Mucosa of descending colon (tissue), 3 donors: ENCODE measurements at regions of chr22 and their contacts with region 1.

Region 1: GRCh38 chr22:23857606-23858483 is at the start of gene SLC2A11:
- DNase-seq: peak; percentile 96 to 98 (median 97)
- ATAC-seq: peak; percentile 97
- H3K4me3 ChIP-seq: peak within 1 kb of the TSS; percentile 29
- H3K4me1 ChIP-seq: peaks cover 6% of the 10 kb centered on the region
- CTCF ChIP-seq: peak; percentile 21
- total RNA-seq, gene SLC2A11: 11.5 to 14.7 (median 12.5) TPM

Region 2: GRCh38 chr22:23767673-23768548 is 89.9 kb before region 1 on chr22 and contains the start of gene CHCHD10:
- intact Hi-C with region 1: loop called in 1 of 2 experiments (anchors 5 kb)
- DNase-seq: peak; percentile 92 to 93 (median 92)
- ATAC-seq: peak; percentile 86
- H3K4me3 ChIP-seq: peak within 1 kb of the TSS; percentile 67
- H3K4me1 ChIP-seq: peaks cover 30% of the 10 kb centered on the region
- CTCF ChIP-seq: peak; percentile 73
- total RNA-seq, gene CHCHD10: 279 to 464 (median 462) TPM

Region 3: DNA sequence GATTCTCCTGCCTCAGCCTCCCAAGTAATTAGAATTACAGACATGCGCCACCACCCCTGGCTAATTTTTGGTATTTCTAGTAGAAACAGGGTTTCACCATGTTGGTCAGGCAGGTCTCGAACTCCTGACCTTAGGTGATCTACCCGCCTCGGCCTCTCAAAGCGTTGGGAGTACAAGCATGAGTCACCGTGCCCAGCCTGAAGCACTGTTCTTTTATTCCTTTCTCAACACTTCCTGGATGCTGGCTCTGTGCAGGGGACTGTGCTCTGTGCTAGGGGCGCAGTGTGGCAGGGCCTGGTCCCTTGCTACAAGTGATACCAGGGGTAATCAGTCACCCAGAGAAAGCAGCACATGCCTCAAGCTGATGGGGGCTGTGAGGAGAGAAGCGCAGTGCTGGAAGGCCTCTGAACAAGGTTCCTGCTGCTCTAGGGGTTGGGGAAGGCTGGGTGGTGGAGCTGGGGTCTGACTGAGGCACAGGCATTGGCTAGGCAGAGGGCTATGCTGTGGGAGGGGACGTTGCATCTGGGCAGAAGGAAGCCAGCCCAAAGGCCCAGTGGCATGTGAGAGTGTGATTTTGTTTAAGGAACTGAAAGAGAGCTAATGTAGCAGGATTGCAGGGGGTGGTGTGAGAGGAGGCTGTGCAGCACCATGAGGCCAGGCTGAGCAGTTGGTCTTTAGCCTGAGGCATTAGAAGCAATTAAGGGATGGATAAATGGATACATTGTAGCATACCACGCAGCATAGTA is 195.8 kb after region 1 on chr22:
- intact Hi-C with region 1: no loop called
- DNase-seq: no peak
- ATAC-seq: no peak
- H3K4me3 ChIP-seq: no peak overlapping the region
- H3K4me1 ChIP-seq: no peaks in the 10 kb centered on the region
- CTCF ChIP-seq: no peak